Common myeloid progenitor, CD34-positive (primary cell): ENCODE measurements at regions of chr2 and their contacts with region 1.

Region 1: DNA sequence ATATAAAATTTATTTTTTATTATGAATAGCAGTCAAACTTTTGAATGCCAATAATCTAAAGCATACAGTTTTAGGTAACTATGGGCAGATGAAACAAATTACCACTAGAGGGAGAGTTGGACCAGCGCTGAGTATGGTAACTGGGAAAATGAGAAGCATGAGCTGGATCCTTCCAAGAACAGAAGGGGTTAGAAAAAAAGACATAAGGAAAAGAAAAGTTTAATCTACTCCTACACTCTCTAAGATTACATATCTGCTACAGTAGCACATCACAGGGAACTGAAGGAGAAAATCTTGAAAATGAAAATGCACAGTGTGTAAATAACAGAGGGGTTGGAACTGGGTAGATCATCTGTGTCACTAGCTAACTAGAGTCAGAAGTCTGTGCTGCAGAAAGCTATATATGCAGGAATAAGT is 15.5 kb downstream of the REG3G start:
- DNase-seq: peak; percentile 28 to 48 (median 34)
- H3K4me3 ChIP-seq: no peak overlapping the region
- H3K27ac ChIP-seq: no peak overlapping the region
- H3K4me1 ChIP-seq: no peaks in the 10 kb centered on the region
- H3K27me3 ChIP-seq: no peaks in the 10 kb centered on the region

Region 2: DNA sequence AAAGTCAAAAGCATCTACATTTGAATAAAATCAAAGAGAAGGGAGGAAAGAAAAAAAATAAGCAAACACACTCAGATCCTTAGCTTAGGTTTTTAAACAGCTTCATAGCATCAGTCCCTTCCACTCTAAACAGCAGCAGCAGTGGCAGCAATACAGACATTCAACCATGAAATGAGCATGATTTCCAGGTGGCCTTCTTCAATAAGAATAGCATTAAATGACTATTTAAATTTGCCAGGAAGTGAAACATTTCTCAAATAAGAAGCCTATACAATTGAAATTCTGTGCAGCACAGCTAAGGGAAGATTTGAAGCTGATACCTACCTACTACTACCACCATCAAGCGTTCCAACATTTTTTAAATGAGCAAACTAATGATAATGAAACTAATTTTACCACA is 153.6 kb before region 1 on chr2:
- CTCF ChIA-PET with region 1: no interaction called
- POLR2A ChIA-PET with region 1: no interaction called
- DNase-seq: no peak
- H3K4me3 ChIP-seq: no peak overlapping the region
- H3K27ac ChIP-seq: no peak overlapping the region
- H3K4me1 ChIP-seq: no peaks in the 10 kb centered on the region
- H3K27me3 ChIP-seq: no peaks in the 10 kb centered on the region

Region 3: GRCh38 chr2:79025421-79025820 is 15.6 kb before region 1 on chr2 and contains the start of gene REG3G:
- CTCF ChIA-PET with region 1: interaction called, 15 read pairs
- POLR2A ChIA-PET with region 1: no interaction called
- DNase-seq: no peak
- H3K4me3 ChIP-seq: no peak within 1 kb of the TSS
- H3K27ac ChIP-seq: no peak within 1 kb of the TSS
- H3K4me1 ChIP-seq: no peaks in the 10 kb centered on the region
- H3K27me3 ChIP-seq: peaks cover 0 to 4% (median 0%) of the 10 kb centered on the region in 5 experiments

Region 4: DNA sequence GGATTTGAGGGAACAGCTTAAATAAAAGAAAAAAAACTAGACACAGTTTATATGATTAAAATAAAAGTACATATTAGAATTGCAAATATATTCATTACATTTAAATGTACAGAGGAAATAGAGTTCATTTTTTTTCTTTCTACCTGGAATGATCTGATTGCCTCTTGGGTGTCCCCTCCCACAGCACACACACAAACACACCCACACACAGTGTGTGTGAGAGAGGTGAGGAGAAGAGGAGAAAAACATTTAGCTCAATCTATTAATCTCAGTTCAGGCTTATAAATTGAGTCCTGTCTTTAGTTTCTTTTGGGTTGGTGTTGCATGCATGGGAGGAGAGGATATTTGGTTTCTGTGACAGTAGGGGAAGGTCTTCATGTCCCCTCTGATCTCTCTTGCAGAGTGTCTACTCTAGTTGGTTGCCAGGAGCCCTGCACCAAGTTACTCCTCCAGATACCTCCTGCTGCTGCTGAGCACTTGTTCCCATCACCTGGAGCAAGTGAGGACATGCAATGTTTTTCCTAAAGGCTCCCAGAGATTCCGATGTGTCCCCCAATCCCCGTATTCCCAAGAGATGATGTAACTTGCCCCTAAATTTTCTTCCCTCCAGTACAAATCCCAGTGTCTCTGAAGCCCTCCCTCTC is 169.4 kb after region 1 on chr2:
- CTCF ChIA-PET with region 1: interaction called, 22 read pairs
- POLR2A ChIA-PET with region 1: no interaction called
- DNase-seq: no peak
- H3K4me3 ChIP-seq: no peak overlapping the region
- H3K27ac ChIP-seq: no peak overlapping the region
- H3K4me1 ChIP-seq: no peaks in the 10 kb centered on the region
- H3K27me3 ChIP-seq: no peaks in the 10 kb centered on the region

Region 5: GRCh38 chr2:79219383-79219988 is 178.4 kb after region 1 on chr2:
- CTCF ChIA-PET with region 1: interaction called, 31 read pairs
- POLR2A ChIA-PET with region 1: no interaction called
- DNase-seq: peak; percentile 65 to 83 (median 76)
- H3K4me3 ChIP-seq: no peak overlapping the region
- H3K27ac ChIP-seq: no peak overlapping the region
- H3K4me1 ChIP-seq: no peaks in the 10 kb centered on the region
- H3K27me3 ChIP-seq: no peaks in the 10 kb centered on the region

Region 6: DNA sequence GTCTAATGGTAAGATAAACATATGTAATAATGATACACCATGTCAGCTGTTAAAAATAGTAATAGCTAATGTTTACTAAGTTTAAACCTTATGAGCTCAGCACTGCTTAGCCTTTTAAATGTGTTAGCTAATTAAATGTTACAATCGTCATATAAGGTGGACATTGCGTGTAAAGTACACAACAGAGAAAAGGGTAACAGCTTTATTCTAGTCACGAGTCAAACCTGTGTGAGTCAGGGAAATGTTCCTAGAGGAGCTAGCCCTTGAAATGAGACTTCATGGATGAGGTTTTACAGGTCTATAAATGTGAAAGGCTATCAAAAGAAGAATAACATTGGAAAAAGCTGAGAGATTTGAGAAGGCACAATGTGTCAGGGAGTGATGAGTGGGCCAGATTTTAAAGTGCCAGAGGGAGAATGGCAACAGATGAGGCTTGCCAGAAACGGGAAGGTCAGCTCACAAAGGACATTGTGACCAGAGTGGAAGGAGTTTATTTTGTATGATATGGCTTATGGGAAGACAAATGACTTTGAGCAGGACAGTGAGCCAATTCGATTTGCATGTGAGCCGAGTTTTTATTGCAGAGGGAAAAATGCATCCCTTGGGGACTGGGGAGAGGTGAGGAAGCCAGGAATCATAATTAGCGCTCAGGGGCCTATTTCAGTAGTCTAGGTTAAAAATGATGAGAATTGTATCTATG is 748.1 kb after region 1 on chr2:
- CTCF ChIA-PET with region 1: no interaction called
- POLR2A ChIA-PET with region 1: no interaction called
- DNase-seq: no peak
- H3K4me3 ChIP-seq: no peak overlapping the region
- H3K27ac ChIP-seq: no peak overlapping the region
- H3K4me1 ChIP-seq: no peaks in the 10 kb centered on the region
- H3K27me3 ChIP-seq: no peaks in the 10 kb centered on the region